Right ventricle myocardium inferior (tissue), 1 donor: ENCODE measurements at regions of chr1 and their contacts with region 1.

Region 1: DNA sequence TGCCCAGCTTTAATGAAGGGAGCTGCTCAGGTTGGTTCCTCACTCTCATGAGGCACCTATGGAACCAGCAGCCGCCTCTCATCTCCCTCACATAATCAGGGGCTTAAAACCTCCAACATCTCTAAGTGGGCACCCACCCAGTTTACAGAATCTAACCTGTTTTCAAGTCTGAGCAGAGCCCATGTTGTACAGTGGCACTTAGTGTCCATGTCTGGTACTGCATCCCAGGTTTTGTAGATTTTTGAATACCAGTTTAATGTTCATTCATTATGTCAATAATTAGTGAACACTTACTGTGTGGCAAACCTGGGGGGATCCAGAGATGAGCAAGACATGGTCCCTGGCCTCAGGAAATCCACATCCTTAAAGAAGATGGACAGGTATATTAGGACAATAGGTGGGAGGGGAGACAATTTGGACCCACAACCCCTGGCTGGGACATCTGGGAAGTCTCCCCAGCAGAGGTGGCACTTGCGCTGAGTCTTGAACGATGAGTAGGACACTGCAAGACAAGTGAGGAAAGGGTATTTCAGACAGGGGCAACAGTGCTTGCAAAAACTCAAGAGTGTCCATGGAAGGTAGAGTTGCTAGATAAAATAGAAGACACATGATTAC is 83.3 kb downstream of the LACTBL1 start:
- DNase-seq: peak; percentile 2
- ATAC-seq: peak; percentile 44

Region 2: GRCh38 chr1:22821012-22821411 is 68.3 kb before region 1 on chr1:
- intact Hi-C with region 1: loop called (anchors 5 kb)
- DNase-seq: no peak
- ATAC-seq: no peak

Region 3: DNA sequence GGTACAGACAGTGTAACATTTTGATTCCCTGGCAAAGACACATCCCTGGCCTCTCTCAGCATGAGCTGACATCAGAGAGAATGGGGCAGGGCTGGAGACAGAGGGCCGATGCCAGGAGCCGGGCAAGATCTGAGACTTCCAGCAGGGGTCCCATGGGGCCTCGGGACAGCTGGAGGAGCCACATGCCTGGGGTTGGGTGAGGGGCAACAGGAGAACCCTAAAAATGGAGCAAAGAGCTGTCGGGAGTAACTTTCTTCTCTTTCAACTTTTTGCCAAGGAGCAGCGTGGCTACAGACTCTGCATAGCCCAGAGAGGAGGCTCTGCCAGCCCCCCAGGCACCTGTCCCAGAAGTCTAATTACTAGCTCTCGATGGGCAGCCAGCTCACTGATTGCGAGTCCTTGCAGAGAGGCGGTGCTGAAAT is 47.4 kb before region 1 on chr1:
- intact Hi-C with region 1: no loop called
- DNase-seq: peak; percentile 81
- ATAC-seq: peak; percentile 78

Region 4: DNA sequence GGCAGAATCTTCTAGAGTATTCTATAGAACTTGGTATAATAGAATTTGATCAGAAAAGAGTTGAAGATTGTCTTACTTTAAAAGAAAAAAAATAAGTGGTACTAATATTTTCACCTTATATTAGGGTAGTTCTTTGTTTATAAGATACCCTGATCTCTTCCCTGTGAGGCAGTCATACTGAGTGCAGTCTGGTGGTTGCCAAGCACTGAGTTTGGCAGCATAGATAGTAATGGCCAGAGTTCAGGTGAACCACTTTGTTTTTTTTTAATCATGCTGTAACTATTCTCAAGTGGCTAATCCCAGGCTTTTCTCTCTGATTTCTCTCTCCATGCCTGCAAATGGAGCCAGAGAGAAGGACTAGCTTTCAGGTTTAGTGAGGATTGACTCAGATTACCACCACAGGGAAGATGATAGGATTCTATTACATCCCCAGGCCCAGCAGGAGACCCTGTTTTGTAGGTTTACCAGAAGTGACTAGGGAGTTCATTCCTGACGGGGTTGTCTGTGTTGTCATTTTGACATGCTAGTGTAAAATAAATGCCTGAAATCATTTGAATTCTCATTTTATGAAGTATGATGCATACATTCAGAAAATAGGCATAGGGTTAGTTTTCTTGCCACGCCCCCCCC is 146.6 kb after region 1 on chr1:
- intact Hi-C with region 1: no loop called
- DNase-seq: no peak
- ATAC-seq: no peak